ENCODE measurements at regions of chr7 and their contacts with region 1.

Region 1: GRCh38 chr7:110943701-110944345 is 147.1 kb upstream of the LRRN3 start:
- DNase-seq: no peak
- ATAC-seq: no peak
- H3K4me3 ChIP-seq: no peak overlapping the region
- H3K4me3 Mint-ChIP-seq: no peak overlapping the region
- H3K27ac ChIP-seq: no peak overlapping the region
- H3K27ac Mint-ChIP-seq: no peak overlapping the region
- H3K4me1 ChIP-seq: no peaks in the 10 kb centered on the region
- H3K4me1 Mint-ChIP-seq: peaks cover 0 to 19% (median 11%) of the 10 kb centered on the region in 7 donors
- H3K27me3 ChIP-seq: no peaks in the 10 kb centered on the region
- H3K27me3 Mint-ChIP-seq: no peaks in the 10 kb centered on the region

Region 2: DNA sequence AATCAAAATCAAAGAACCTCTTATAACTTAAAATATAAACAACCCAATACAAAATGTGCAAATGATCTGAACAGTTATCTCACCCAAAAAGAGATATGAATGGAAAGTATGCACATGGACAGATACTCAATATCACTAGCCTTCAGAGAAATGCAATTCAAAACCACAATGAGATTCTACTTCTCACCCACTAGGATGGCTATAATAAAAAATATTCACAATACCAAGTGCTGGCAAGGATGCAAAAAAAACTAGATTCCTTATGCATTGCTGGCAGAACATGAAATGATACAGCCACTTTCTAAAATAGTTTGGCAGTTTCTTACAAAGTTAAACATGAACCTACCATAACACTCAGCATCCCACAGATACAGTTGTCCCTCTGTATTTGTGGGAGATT is 17.0 kb after region 1 on chr7:
- CTCF ChIA-PET with region 1: no interaction called
- POLR2A ChIA-PET with region 1: no interaction called
- intact Hi-C with region 1: loop called in 1 of 2 experiments (anchors 2 kb)
- DNase-seq: no peak
- ATAC-seq: no peak
- H3K4me3 ChIP-seq: no peak overlapping the region
- H3K4me3 Mint-ChIP-seq: no peak overlapping the region
- H3K27ac ChIP-seq: no peak overlapping the region
- H3K27ac Mint-ChIP-seq: no peak overlapping the region
- H3K4me1 ChIP-seq: no peaks in the 10 kb centered on the region
- H3K4me1 Mint-ChIP-seq: peaks cover 1 to 16% (median 11%) of the 10 kb centered on the region in 7 donors
- H3K27me3 ChIP-seq: no peaks in the 10 kb centered on the region
- H3K27me3 Mint-ChIP-seq: no peaks in the 10 kb centered on the region

Measured in naive thymus-derived CD4-positive, alpha-beta T cell (primary cell).